MCF 10A (cell line): ENCODE measurements at regions of chr20 and their contacts with region 1.

Region 1: GRCh38 chr20:62302341-62303058 is at the start of gene ADRM1:
- DNase-seq: peak; percentile 95
- H3K4me3 Mint-ChIP-seq: peak within 1 kb of the TSS; percentile 90
- H3K27ac Mint-ChIP-seq: peak within 1 kb of the TSS; percentile 95
- H3K4me1 Mint-ChIP-seq: peaks cover 18% of the 10 kb centered on the region
- H3K27me3 Mint-ChIP-seq: no peaks in the 10 kb centered on the region
- CTCF ChIP-seq: peak; percentile 95
- total RNA-seq, gene ADRM1: 98.0 and 127 TPM in 2 replicates

Region 2: DNA sequence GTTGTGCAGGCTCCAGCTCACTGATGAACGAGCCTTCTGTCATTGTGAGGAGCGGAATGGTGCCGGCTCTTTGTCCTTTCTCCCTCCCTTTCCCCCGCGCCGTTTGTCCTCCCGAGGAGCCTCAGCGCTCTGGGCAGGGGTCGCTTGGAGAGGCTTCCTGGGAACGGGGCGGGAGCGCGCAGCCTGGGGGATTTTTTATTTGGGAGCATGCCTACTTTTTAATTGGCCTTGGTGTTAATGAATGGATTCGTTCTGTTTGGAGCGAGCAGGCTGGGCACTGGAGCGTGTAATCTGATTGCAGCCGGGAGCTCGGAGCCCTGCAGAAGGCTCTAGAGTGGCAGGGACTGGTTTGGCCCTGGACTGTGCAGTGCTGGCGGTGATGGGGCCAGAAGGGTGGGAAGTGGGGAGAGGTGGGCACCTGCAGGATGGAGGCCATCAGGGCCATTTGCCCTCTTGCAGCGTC is 931.6 kb before region 1 on chr20:
- CTCF ChIA-PET with region 1: no interaction called
- POLR2A ChIA-PET with region 1: no interaction called
- intact Hi-C with region 1: no loop called
- DNase-seq: no peak
- H3K4me3 Mint-ChIP-seq: no peak overlapping the region
- H3K27ac Mint-ChIP-seq: no peak overlapping the region
- H3K4me1 Mint-ChIP-seq: no peaks in the 10 kb centered on the region
- H3K27me3 Mint-ChIP-seq: no peaks in the 10 kb centered on the region
- CTCF ChIP-seq: no peak

Region 3: DNA sequence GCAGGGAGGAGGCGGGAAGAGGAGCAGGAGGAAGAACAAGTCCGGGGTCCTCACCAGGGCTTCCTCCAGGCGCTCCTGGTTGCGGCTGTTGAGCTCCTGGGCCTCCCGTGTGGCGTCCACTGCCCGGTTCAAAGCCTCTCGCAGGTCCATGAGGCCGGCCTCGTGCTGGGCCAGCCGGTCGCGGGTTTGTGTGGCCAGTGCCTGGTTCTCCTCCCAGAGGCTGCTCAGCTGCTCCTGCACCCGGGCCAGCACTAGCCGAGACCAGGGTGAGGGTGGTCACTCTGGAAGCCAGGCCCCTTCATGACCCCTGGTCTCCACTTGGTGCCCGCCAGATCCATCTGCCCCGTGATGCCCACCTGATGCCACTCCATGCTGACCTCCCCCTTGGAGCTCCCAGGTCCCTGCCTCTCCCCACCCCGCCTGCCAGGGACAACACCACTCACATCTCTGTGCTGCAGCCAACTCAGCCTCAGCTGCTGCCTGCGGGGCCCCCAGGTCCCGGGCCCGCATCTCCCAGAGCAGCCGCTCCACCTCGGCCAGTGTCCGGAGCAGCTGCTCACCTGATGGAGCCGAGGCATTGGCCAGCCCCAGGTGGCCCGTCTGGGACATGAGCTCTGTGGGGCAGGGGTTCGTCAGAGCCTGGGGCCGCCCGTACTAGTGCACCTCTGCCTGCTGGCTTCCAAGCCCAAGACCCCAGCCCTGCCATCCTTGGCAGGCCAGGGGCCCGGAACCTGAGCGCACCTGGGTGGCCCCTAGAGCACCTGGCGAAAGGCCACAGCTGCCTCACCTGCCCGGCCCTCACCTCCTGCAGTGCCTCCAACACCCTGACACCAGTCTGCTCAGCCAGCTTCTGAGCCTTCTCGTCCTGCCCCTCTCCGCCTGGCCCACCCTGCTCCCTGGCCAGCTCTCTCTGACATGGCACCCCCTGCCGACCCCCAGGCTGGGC is 16.2 kb after region 1 on chr20:
- CTCF ChIA-PET with region 1: interaction called, 10 read pairs
- POLR2A ChIA-PET with region 1: interaction called, 32 read pairs
- intact Hi-C with region 1: no loop called
- DNase-seq: no peak
- H3K4me3 Mint-ChIP-seq: no peak overlapping the region
- H3K27ac Mint-ChIP-seq: no peak overlapping the region
- H3K4me1 Mint-ChIP-seq: peaks cover 5% of the 10 kb centered on the region
- H3K27me3 Mint-ChIP-seq: no peaks in the 10 kb centered on the region
- CTCF ChIP-seq: no peak

Region 4: DNA sequence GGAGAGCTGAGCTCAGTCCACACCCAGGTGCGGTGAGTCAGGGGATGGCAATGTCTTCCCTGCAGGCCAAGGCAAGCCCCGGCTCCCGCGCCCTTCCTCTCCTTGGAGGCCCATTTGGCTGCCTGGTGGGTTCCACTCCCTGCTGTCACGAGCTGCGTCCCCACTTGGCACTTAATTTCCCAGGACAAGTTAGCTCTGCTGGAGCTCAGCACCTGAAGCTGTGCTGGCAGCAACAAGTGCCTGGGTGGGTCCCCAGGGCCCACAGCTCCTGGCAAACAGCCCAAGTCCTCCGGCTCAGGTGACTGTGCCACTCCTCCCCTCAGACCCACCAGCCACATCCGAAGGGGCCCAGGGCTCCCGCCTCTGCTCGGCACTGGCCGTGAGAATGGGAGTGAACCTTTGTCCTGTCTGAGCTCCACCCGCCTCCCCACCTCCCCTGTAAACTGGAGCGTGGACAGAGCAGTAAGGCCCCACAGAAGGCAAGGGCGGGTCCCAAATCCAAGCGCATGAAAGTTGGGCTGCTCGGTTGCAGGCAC is 47.7 kb after region 1 on chr20:
- CTCF ChIA-PET with region 1: interaction called, 3 read pairs
- POLR2A ChIA-PET with region 1: interaction called, 66 read pairs
- intact Hi-C with region 1: loop called (anchors 1 kb)
- DNase-seq: peak; percentile 95
- H3K4me3 Mint-ChIP-seq: peak overlapping the region; percentile 53
- H3K27ac Mint-ChIP-seq: peak overlapping the region; percentile 93
- H3K4me1 Mint-ChIP-seq: peaks cover 22% of the 10 kb centered on the region
- H3K27me3 Mint-ChIP-seq: no peaks in the 10 kb centered on the region
- CTCF ChIP-seq: no peak

Region 5: DNA sequence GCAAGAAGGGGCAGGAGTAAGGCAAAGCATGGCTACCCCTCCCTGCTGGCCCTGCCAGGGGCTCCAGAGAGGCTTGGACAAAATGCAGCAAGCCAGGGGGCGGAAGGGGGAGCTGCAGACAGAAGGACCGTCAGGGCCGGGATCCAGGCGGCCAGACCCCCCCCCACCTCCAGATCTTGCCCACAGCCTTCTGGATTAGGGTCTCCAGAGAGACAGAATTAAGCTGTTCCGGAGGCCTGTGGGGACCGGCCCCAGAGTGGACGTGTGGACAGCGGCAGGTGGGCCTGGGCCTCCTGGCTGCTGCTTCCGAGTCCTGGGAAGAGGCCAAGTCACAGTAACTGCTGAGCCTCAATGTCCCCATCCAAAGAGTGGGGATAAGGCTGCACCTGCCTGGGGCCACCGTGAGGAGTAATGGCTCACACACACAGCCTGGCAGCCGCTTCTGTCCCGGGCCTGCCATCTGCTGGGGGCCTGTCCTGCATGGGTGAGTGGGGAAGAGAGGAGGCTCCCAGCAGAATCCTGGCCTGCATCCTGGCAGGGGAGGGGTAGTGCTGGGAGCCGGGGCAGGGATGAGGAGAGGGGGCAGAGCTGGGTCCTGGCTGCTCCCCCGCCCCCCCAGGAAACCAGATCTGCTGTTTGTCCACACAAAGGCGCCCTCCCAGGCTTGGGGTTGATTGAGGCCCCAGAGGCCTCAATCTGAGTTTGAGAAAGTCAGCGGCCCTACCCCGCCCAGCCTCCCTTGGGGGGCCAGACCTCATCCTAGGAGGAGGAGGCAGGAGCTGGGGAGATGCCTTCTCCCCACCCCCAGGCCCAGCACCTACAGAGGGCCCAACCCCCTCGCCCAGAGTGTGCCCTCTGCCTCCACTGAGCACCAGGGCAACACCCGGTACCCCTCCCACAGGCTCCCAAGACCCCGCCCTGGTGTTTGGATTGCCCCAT is 60.8 kb after region 1 on chr20:
- CTCF ChIA-PET with region 1: interaction called, 16 read pairs
- POLR2A ChIA-PET with region 1: interaction called, 128 read pairs
- intact Hi-C with region 1: loop called (anchors 5 kb)
- DNase-seq: peak; percentile 42
- H3K4me3 Mint-ChIP-seq: peak overlapping the region; percentile 80
- H3K27ac Mint-ChIP-seq: no peak overlapping the region
- H3K4me1 Mint-ChIP-seq: peaks cover 46% of the 10 kb centered on the region
- H3K27me3 Mint-ChIP-seq: no peaks in the 10 kb centered on the region
- CTCF ChIP-seq: peak; percentile 20

Region 6: DNA sequence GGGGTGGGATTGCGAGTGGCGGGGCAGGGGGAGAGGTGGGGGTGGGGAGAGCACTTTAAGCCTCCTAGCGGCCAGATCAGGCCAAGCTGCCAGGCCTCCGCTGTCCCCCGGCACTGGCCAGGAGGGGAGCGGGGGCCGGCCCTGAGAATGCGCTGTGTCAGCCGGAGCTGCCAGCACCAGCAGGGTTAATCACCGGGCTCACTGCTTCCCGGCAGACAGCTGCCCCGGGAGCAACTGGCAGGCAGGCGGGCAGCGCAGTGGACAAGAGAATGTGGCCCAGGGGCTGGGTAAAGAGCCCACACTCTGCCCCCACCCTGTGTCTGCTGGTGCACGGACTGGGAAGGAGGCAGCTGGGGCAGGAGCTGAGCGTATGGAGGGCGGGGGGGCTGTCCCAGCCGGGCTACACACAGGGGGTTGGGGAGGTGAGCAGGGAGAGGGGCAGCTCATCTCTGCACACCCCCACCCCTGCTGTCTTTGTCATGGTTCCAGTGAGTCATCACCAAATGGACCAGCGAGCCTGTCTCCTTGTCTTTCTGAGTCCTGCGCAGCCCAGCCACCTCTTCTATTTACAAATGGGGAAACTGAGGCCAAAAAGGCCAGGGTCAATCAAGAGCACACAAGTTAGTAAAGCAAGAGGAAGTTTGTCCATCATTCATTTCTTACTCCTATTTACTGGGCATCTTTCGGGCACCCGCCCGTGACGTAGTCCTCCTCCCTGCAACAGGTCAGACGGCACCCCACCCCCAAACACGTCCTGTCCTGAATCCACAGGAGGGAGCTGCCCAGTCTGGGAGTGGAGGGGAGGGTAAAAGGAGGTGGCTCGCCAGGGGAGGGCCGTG is 66.7 kb after region 1 on chr20:
- CTCF ChIA-PET with region 1: interaction called, 16 read pairs
- POLR2A ChIA-PET with region 1: interaction called, 128 read pairs
- intact Hi-C with region 1: loop called (anchors 5 kb)
- DNase-seq: peak; percentile 76
- H3K4me3 Mint-ChIP-seq: peak overlapping the region; percentile 80
- H3K27ac Mint-ChIP-seq: no peak overlapping the region
- H3K4me1 Mint-ChIP-seq: peaks cover 35% of the 10 kb centered on the region
- H3K27me3 Mint-ChIP-seq: no peaks in the 10 kb centered on the region
- CTCF ChIP-seq: peak; percentile 30

Region 7: DNA sequence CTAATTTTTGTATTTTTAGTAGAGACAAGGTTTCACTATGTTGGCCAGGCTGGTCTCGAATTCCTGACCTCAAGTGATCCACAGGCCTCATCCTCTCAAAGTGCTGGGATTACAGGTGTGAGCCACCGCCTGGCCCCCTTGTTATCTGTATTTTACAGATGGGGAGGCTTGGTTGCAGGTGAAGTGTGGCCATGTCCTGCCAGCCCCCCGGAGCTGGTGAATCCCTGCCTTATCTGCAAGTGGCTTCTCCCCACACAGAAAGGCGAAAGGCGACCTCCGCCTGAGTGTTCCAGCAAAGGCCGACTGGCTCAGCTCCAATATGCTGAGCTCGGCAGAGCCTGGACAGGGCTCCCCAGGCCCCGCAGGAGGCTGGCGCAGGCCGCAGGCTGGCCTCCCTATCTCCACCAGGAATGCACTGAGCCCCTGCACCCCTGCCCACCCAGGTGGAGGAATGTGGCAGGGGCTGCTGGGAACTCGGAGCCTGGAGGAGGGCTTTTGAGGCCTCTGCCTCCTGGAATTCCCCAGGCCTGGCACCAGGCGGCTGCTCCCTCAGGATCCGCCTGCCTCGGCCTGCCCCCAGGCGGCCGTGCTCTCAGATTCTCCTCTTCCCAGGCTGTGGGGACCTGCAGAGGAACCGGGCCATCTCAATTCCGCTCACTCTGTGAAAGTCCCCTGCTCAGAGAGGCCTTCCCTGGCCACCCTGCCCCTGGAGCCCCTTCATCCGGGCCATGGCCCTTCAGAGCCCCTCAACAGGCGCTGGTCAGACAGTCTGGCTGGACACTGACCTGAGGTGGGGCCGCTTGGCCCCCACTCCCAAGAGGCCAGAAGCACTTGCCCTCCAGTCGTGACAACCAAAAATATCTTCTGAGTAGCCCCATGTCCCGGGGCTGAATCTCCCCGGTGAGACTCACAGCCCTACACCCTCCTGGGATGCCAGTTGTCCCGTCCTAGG is 73.9 kb after region 1 on chr20:
- CTCF ChIA-PET with region 1: interaction called, 33 read pairs
- POLR2A ChIA-PET with region 1: interaction called, 15 read pairs
- intact Hi-C with region 1: no loop called
- DNase-seq: peak; percentile 52
- H3K4me3 Mint-ChIP-seq: no peak overlapping the region
- H3K27ac Mint-ChIP-seq: no peak overlapping the region
- H3K4me1 Mint-ChIP-seq: peaks cover 11% of the 10 kb centered on the region
- H3K27me3 Mint-ChIP-seq: no peaks in the 10 kb centered on the region
- CTCF ChIP-seq: no peak